ENCODE measurements at regions of chr1 and their contacts with region 1.

Region 1: DNA sequence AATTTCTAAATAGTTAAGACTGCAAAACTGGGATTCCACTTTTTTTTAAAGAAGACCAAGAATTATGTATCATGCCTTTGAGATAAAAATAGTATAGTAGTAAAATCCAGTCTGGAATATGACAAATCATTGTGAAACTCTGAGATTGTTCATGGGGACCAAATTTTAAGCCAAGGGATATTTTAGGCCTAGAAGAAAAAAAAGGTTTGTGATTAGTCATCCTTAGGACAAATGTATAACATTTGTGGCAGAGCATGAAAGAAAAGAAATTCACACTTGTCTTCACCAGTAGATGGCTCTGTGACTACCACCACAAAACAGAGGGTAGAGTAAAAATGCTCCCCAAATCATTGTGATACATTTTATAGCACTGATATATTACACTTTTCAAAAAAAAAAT is 226.1 kb downstream of the KCTD3 start:
- DNase-seq: no peak
- H3K4me3 ChIP-seq: no peak overlapping the region
- H3K4me3 Mint-ChIP-seq: no peak overlapping the region
- H3K27ac ChIP-seq: no peak overlapping the region
- H3K27ac Mint-ChIP-seq: no peak overlapping the region
- H3K4me1 ChIP-seq: no peaks in the 10 kb centered on the region
- H3K4me1 Mint-ChIP-seq: no peaks in the 10 kb centered on the region
- H3K27me3 ChIP-seq: no peaks in the 10 kb centered on the region
- H3K27me3 Mint-ChIP-seq: no peaks in the 10 kb centered on the region

Region 2: DNA sequence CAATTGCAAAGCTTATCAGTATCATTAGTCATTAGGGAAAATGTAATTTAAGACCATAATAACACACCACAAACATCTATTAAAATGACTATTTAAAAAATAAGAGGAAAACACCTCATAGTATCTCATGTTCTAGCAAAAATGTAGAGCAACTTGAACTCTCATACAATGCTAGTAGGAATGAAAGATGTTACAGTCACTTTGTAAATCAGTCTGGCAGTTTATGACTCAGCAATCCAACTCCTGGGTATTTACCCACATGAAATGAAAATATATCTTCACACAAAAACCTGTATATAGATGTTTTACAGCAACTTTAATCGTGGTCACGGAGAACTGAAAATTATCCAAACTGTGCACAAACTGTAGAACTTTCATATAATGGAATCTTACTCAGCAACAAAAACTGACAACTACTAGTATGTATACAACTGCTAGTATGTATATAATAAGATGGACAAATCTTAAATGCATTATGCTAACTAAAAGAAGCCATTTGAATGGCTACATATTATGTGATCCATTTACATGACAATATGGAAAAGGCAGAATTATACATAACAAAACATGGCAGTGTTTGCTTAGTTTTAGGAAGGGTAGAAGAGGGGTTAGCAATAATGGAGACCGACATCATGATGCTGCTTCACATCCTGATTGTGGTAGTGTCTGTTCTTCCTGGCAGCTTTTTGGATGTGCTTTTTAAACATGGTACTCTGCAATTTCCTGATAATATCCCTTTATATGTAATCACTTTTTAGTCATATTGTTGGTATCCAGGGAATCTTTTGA is 41.0 kb after region 1 on chr1:
- CTCF ChIA-PET with region 1: no interaction called
- POLR2A ChIA-PET with region 1: interaction called, 13 read pairs
- DNase-seq: no peak
- H3K4me3 ChIP-seq: no peak overlapping the region
- H3K4me3 Mint-ChIP-seq: no peak overlapping the region
- H3K27ac ChIP-seq: no peak overlapping the region
- H3K27ac Mint-ChIP-seq: no peak overlapping the region
- H3K4me1 ChIP-seq: no peaks in the 10 kb centered on the region
- H3K4me1 Mint-ChIP-seq: no peaks in the 10 kb centered on the region
- H3K27me3 ChIP-seq: no peaks in the 10 kb centered on the region
- H3K27me3 Mint-ChIP-seq: no peaks in the 10 kb centered on the region